ENCODE measurements at regions of chr3 and their contacts with region 1.

Region 1: DNA sequence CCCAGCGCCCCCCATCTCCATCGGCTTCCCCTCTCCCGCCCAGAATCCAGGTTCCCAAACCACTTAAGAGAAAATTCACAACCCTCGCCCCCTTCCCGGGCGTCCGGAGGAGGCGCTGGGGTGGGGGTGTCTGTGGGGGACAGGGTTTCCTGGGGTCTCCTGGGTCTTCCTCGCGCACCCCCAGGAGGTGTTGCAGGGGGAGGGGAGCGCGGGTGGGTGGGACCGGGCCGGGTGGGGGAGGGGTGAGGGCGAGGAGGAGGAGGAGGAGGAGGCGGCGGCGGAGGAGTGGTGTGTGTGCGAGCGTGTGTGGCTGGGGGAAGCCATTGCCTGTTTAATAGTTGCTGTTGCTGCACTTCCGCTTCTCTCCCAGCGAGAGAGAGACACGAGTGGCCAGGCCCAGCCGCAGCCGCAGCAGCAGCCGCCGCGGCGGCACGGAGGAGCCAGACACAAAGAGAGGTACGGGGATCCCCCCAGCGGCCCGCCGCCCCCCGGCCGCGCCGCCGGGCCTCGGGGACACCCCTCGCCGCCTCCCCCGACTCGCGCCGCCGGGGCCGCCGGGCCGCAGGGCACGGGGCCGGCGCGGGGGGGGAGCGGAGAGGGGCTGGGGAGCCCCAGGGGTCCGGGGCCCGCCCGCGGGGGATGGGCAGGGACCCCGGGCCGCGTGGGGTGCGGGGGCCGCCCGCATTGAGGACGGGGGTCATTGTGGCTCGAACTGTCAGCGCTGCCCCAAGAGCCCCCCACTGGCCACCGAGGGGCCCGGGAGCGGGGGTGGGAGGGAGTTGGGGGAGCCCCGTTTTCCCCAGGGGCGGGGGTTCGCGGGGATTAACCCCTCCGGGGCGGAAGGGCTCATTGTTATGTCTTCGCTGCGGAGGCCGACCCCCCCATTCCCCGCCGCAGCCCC is at the start of gene UBE2E1:
- DNase-seq: peak; percentile 55
- H3K4me3 ChIP-seq: peak within 1 kb of the TSS; percentile 81 to 95 (median 94)
- H3K27ac ChIP-seq: peak within 1 kb of the TSS; percentile 42
- H3K4me1 ChIP-seq: peaks cover 25% of the 10 kb centered on the region
- H3K27me3 ChIP-seq: no peaks in the 10 kb centered on the region
- CTCF ChIP-seq: peak in 1 of 2 donors; percentile 4
- POLR2A ChIP-seq: peak; percentile 56
- total RNA-seq, gene UBE2E1: 114 TPM in 2 replicates

Region 2: GRCh38 chr3:22759636-22760310 is 1046.1 kb before region 1 on chr3:
- CTCF ChIA-PET with region 1: no interaction called
- POLR2A ChIA-PET with region 1: no interaction called
- dilution Hi-C with region 1: no loop called
- intact Hi-C with region 1: no loop called
- DNase-seq: no peak
- H3K4me3 ChIP-seq: no peak overlapping the region
- H3K27ac ChIP-seq: no peak overlapping the region
- H3K4me1 ChIP-seq: no peaks in the 10 kb centered on the region
- H3K27me3 ChIP-seq: no peaks in the 10 kb centered on the region
- CTCF ChIP-seq: no peak
- POLR2A ChIP-seq: no peak

Region 3: DNA sequence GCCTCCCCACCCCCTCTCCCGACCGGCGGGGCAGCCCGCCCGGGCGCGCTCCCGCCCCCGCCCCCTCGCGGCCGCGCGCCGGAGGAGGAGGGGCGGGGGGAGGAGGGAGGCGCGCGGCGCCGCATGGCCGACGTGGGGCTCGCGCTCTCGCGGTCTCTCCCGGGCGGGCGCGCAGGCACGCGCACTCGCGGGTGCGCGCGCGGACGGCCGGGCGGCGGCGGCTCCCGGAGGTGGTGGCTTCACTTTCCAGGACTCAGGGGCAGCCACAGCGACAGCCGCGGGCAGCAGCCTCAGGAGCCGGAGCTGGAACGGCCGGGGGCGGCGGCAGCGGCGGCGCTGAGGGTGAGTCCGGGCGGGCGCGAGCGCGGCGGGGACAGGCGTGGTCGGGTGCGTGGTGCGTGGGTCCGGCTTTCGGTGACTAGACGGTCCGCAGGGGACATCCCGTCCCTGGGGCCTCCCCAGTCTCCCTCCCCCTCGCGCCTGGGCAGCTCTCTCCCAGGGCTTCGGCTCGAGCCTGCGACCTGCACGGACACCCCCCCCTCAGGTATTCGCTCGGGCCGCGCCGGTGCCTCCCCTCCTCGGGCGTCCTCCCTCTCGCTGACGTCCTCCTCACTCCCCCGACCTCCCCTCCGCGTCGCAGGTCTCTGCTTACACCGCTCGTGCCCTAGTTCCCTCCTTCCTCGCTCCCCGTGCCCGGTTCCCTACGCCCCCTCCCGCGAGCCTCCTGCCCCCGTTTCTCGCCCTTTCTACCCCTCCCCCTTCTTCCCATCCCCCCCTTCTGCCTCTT is 602.8 kb before region 1 on chr3 and contains the start of gene UBE2E2:
- CTCF ChIA-PET with region 1: no interaction called
- POLR2A ChIA-PET with region 1: no interaction called
- dilution Hi-C with region 1: no loop called
- intact Hi-C with region 1: loop called (anchors 5 kb)
- DNase-seq: peak; percentile 66
- H3K4me3 ChIP-seq: peak within 1 kb of the TSS; percentile 94 to 97 (median 95)
- H3K27ac ChIP-seq: peak within 1 kb of the TSS; percentile 58
- H3K4me1 ChIP-seq: peaks cover 5% of the 10 kb centered on the region
- H3K27me3 ChIP-seq: peaks cover 6 to 8% of the 10 kb centered on the region in 2 experiments
- CTCF ChIP-seq: no peak
- POLR2A ChIP-seq: no peak
- total RNA-seq, gene UBE2E2: 32.8 and 45.4 TPM in 2 replicates

Region 4: DNA sequence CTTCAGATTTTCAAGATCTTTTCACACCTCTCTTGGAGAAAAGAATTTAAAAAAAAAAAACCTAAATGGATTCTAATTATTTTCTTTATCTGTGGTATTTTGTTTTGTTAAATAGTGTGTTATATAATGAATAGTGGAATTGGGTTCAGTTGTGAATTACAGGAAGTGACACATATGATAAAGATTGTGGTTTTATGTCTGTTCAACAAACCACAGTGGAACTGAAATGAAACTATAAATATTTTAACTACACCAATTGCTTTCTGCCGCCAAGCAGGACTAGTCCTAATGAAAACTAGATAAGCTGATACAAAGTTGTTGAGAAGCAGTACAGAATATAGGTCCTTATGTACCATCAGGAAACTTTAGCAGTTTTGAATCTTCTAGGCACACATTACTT is 481.1 kb before region 1 on chr3:
- CTCF ChIA-PET with region 1: no interaction called
- POLR2A ChIA-PET with region 1: no interaction called
- dilution Hi-C with region 1: no loop called
- intact Hi-C with region 1: loop called (anchors 10 kb)
- DNase-seq: peak; percentile 77
- H3K4me3 ChIP-seq: peak overlapping the region in 2 of 3 experiments; percentile 20 to 66
- H3K27ac ChIP-seq: peak overlapping the region; percentile 82
- H3K4me1 ChIP-seq: peaks cover 23% of the 10 kb centered on the region
- H3K27me3 ChIP-seq: no peaks in the 10 kb centered on the region
- CTCF ChIP-seq: no peak
- POLR2A ChIP-seq: no peak

Region 5: DNA sequence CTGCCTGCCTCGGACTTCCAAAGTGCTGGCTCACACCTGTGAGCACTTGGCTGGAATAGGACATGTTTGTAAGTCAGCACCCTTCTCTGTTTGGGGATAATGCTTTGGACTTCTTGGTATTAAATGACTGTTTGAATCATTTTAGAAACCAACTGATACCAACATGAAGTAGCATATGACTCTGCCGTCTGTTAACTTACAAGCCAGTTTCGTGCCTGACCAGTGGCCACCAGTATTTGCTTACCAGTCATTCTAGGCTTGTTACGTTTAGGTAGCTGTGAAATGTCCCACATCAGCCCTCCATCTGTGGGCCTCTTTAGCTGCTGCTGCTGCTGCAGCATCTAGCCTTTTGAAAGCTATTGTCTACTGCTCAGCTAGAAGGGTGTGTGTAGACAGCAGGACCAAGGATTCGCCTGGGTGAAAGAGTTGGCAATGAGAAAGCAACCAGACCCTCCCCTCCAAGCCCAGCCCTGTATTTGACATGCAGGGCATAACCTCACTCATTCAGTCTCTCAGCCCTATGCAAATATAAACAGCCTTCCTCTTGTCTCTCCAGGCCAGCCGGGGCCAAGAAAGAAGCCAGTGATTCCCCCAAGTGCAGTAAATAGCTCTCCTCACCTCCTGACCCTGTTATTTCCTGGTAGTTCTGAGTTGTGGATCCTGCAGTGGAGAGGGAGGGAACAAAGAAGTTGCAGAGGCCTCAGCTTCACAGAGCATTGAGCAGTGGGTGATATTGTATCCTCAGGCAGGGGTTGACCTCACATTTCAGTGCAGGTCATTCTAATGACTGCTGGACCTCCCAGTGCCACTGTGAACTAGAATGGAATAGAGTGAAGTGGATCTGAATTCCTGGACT is 59.9 kb after region 1 on chr3:
- CTCF ChIA-PET with region 1: interaction called, 4 read pairs
- POLR2A ChIA-PET with region 1: no interaction called
- dilution Hi-C with region 1: no loop called
- intact Hi-C with region 1: loop called (anchors 1 kb)
- DNase-seq: peak; percentile 87
- H3K4me3 ChIP-seq: no peak overlapping the region
- H3K27ac ChIP-seq: peak overlapping the region; percentile 4
- H3K4me1 ChIP-seq: peaks cover 48% of the 10 kb centered on the region
- H3K27me3 ChIP-seq: no peaks in the 10 kb centered on the region
- CTCF ChIP-seq: no peak
- POLR2A ChIP-seq: no peak

Measured in endothelial cell of umbilical vein (primary cell).